Activated T-helper 2 cell treated with anti-CD3 and anti-CD28 coated beads, Interferon-gamma antibody, Interleukin-2, Interleukin-4, amounts not matched to agents 10 μg/mL and 5 μg/mL and 100 μg/mL, durations not matched to agents 14 hours and 24 hours and 36 hours (primary cell): ENCODE measurements at regions of chr19 and their contacts with region 1.

Region 1: DNA sequence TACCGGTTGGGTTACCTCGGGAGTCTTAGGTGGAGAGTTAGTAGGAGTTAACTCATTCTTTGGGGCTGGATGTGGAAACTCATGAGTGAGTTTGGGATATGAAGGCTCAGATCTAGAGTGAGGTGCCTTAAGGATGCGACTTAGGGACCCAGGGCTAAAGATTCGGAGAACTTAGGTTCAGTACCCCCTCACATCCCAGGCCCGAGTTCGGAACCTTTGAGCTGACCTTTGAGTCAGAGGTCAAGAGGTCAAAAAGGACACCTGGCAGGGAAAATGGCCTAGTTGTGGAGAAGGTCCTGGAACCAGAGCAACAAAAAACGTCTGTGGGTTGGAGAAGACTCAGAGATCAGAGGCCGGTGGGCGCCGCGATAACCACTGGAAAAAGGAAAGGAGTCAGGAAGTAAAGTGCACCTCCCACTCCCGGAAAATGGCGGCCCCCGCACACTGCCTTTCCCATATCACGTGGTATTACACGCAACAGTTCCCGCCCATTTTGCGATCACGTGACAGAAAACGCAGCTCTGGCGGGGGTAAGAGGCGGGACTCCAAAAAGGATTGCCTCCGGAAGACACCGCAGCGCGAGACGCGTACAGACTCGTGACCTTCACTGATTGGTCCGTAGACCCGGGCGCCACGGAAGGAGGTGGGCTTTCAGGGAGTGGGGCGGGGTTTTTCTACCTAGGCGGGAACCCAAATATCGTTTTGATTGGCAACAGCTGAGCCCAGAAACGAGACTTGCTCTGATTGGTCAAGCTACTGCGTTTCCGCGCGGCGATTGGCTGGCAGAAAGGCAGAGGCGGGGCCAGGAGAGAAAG is at the start of gene ACTMAP:
- DNase-seq: peak; percentile 100
- H3K4me3 Mint-ChIP-seq: peak within 1 kb of the TSS; percentile 96
- H3K27ac Mint-ChIP-seq: peak within 1 kb of the TSS; percentile 97
- H3K4me1 Mint-ChIP-seq: peaks cover 29% of the 10 kb centered on the region
- H3K27me3 Mint-ChIP-seq: no peaks in the 10 kb centered on the region
- total RNA-seq, gene ACTMAP: 13.2 and 14.2 TPM in 2 replicates

Region 2: GRCh38 chr19:40444192-40445028 is 305.9 kb before region 1 on chr19 and contains the start of gene SERTAD3:
- intact Hi-C with region 1: loop called (anchors 10 kb)
- DNase-seq: peak; percentile 96
- H3K4me3 Mint-ChIP-seq: peak within 1 kb of the TSS; percentile 99
- H3K27ac Mint-ChIP-seq: peak within 1 kb of the TSS; percentile 97
- H3K4me1 Mint-ChIP-seq: peaks cover 14% of the 10 kb centered on the region
- H3K27me3 Mint-ChIP-seq: no peaks in the 10 kb centered on the region
- total RNA-seq, gene SERTAD3: 12.5 and 13.1 TPM in 2 replicates

Region 3: GRCh38 chr19:40674291-40674690 is 76.0 kb before region 1 on chr19:
- intact Hi-C with region 1: no loop called
- DNase-seq: no peak
- H3K4me3 Mint-ChIP-seq: no peak overlapping the region
- H3K27ac Mint-ChIP-seq: peak overlapping the region; percentile 4
- H3K4me1 Mint-ChIP-seq: no peaks in the 10 kb centered on the region
- H3K27me3 Mint-ChIP-seq: no peaks in the 10 kb centered on the region

Region 4: DNA sequence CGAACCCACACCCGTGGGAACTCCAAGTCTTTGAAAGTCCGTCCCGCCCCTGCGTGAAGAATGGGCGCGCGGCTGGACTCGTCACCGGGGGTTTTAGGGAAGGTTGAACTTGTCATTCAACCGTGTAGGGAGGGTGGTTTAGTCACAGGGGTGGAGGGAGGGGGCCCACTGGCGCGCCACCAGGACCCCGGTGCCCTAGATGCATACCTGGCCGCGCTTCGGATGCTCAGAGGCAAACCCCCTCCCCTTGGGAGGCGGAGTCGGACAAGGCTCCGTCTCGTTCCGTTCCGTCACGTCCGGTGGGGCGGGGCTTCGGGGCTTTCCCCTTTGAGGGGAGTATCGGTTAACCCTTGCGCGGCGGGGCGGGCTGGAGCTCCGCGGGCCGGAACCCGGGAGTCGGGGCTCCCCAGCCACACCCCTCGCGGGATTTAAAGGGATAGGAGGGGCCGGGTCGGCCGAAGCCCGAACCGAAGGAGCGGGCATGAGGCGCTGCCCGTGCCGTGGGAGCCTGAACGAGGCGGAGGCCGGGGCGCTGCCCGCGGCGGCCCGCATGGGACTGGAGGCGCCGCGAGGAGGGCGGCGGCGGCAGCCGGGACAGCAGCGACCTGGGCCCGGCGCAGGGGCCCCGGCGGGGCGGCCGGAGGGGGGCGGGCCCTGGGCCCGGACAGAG is 33.5 kb before region 1 on chr19 and contains the starts of genes COQ8B and ITPKC:
- intact Hi-C with region 1: loop called (anchors 1 kb)
- DNase-seq: peak; percentile 98
- H3K4me3 Mint-ChIP-seq: peak within 1 kb of the TSS; percentile 94
- H3K27ac Mint-ChIP-seq: peak within 1 kb of the TSS; percentile 92
- H3K4me1 Mint-ChIP-seq: peaks cover 48% of the 10 kb centered on the region
- H3K27me3 Mint-ChIP-seq: no peaks in the 10 kb centered on the region
- total RNA-seq, gene COQ8B: 33.5 and 36.7 TPM in 2 replicates
- total RNA-seq, gene ITPKC: 7.4 and 8.4 TPM in 2 replicates

Region 5: GRCh38 chr19:40791996-40792391 is 41.7 kb after region 1 on chr19:
- intact Hi-C with region 1: loop called (anchors 1 kb)
- DNase-seq: no peak
- H3K4me3 Mint-ChIP-seq: no peak overlapping the region
- H3K27ac Mint-ChIP-seq: peak overlapping the region; percentile 78
- H3K4me1 Mint-ChIP-seq: peaks cover 11% of the 10 kb centered on the region
- H3K27me3 Mint-ChIP-seq: no peaks in the 10 kb centered on the region

Region 6: DNA sequence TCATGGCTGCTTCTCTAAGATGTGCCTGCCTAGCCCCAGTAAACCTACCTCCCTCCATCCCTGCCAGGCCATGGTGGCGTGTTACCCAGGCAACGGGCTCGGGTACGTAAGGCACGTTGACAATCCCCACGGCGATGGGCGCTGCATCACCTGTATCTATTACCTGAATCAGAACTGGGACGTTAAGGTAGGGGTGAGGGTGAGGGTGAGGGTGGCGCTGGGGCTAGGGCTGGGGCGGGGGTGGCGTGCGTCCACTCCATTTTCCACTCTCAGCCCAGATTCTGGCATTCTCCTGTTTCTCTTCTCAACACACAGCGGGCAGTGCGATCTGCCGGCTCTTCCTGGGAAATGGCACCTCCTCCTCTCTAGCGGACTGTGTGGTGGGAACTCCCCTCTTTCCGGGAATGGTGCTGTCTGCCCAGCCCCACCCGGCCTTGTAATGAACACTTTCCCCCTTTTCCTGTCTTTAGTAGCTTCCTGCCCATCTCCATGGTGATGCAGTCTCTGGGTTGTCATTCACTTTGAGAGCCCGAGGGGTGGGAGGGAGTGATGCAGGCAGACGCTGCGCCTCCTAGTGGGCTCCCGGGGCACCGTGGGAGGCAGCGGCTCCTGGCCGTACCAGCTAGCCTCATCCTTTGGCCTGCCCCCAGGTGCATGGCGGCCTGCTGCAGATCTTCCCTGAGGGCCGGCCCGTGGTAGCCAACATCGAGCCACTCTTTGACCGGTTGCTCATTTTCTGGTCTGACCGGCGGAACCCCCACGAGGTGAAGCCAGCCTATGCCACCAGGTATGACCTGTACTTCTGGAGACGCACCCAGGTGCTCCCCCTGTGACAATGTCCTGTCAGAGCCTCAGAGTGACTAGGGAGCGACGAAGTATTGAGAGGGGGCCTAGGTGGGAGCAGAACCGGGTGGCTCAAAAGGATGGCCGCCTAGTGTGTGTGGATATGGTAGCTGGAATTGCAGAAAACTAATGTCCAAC is 56.5 kb after region 1 on chr19:
- intact Hi-C with region 1: loop called (anchors 2 kb)
- DNase-seq: peak; percentile 71
- H3K4me3 Mint-ChIP-seq: peak overlapping the region; percentile 63
- H3K27ac Mint-ChIP-seq: peak overlapping the region; percentile 83
- H3K4me1 Mint-ChIP-seq: peaks cover 76% of the 10 kb centered on the region
- H3K27me3 Mint-ChIP-seq: no peaks in the 10 kb centered on the region